Vagina (tissue), 2 donors: ENCODE measurements at regions of chr1 and their contacts with region 1.

Region 1: GRCh38 chr1:232978091-232978634 is 27.8 kb downstream of the NTPCR start:
- DNase-seq: no peak
- H3K4me3 ChIP-seq: no peak overlapping the region
- H3K27ac ChIP-seq: no peak overlapping the region
- H3K4me1 ChIP-seq: peaks cover 12% of the 10 kb centered on the region
- H3K27me3 ChIP-seq: no peaks in the 10 kb centered on the region
- CTCF ChIP-seq: no peak
- POLR2A ChIP-seq: no peak

Region 2: DNA sequence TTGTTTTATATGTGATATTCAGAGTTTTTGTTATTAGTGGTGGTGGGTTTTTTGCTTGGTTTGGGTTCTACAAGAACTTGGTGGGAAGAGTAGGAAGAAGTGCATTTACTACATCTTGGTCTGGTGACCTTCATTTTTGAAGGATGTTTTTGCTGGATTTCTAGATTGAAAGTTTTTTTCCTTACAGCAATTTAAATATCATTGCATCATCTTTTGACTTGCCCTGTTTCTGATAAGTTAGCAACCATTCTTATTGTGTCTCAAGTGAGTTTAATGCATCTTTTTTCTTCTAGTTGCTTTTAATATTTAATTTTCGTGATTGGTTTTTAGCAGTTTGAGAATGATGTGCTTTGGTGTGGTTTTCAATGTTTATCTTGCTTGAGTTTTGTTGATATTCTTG is 903.9 kb before region 1 on chr1:
- intact Hi-C with region 1: loop called (anchors 10 kb)
- DNase-seq: no peak
- H3K4me3 ChIP-seq: no peak overlapping the region
- H3K27ac ChIP-seq: no peak overlapping the region
- H3K4me1 ChIP-seq: no peaks in the 10 kb centered on the region
- H3K27me3 ChIP-seq: no peaks in the 10 kb centered on the region
- CTCF ChIP-seq: no peak
- POLR2A ChIP-seq: no peak